Right ventricle myocardium superior (tissue), 1 donor: ENCODE measurements at regions of chr12 and their contacts with region 1.

Region 1: GRCh38 chr12:57452937-57453509 is 2.1 kb upstream of the INHBE start:
- DNase-seq: peak; percentile 89
- ATAC-seq: peak; percentile 93

Region 2: DNA sequence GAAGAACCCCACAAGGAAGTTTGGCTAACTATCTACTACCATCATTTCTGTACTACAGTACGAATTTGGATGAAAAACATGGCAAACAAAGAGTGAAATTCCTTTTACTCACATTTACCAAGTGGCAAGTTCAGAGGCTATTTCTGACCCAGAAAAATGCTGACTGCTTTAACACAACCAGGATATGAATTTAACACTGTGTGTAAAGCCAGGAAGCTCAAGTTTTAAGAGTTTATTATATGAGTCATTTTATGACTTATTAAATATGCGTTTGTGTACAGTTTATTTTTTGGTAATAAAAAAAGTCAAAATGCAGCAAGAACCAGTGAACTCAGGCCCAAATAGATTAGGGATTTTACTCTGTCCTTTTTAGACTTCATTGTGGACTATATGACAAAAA is 143.6 kb before region 1 on chr12:
- intact Hi-C with region 1: loop called (anchors 2 kb)
- DNase-seq: no peak
- ATAC-seq: no peak

Region 3: GRCh38 chr12:57782608-57783465 is 329.8 kb after region 1 on chr12 and contains the start of gene TSFM:
- intact Hi-C with region 1: no loop called
- DNase-seq: peak; percentile 99
- ATAC-seq: peak; percentile 95
- total RNA-seq, gene TSFM: 49.5 TPM